Activated CD8-positive, alpha-beta T cell treated with anti-CD3 and anti-CD28 coated beads, Interleukin-2, amount 10 ng/mL, durations not matched to agents 7 days and 5 days (primary cell): ENCODE measurements at regions of chr1 and their contacts with region 1.

Region 1: GRCh38 chr1:40774266-40774998 is 9.2 kb upstream of the KCNQ4 start:
- DNase-seq: peak; percentile 76
- ATAC-seq: peak; percentile 72
- H3K4me3 Mint-ChIP-seq: no peak overlapping the region
- H3K27ac Mint-ChIP-seq: peak overlapping the region; percentile 11
- H3K4me1 Mint-ChIP-seq: peaks cover 26% of the 10 kb centered on the region
- H3K27me3 Mint-ChIP-seq: no peaks in the 10 kb centered on the region

Region 2: GRCh38 chr1:40717955-40718354 is 56.5 kb before region 1 on chr1:
- CTCF ChIA-PET with region 1: interaction called, 13 read pairs
- POLR2A ChIA-PET with region 1: no interaction called
- DNase-seq: no peak
- ATAC-seq: no peak
- H3K4me3 Mint-ChIP-seq: no peak overlapping the region
- H3K27ac Mint-ChIP-seq: no peak overlapping the region
- H3K4me1 Mint-ChIP-seq: peaks cover 36% of the 10 kb centered on the region
- H3K27me3 Mint-ChIP-seq: no peaks in the 10 kb centered on the region

Region 3: GRCh38 chr1:40763742-40764532 is 10.5 kb before region 1 on chr1:
- CTCF ChIA-PET with region 1: interaction called, 78 read pairs
- POLR2A ChIA-PET with region 1: no interaction called
- DNase-seq: no peak
- ATAC-seq: peak; percentile 50
- H3K4me3 Mint-ChIP-seq: peak overlapping the region; percentile 62
- H3K27ac Mint-ChIP-seq: peak overlapping the region; percentile 95
- H3K4me1 Mint-ChIP-seq: peaks cover 49% of the 10 kb centered on the region
- H3K27me3 Mint-ChIP-seq: no peaks in the 10 kb centered on the region

Region 4: GRCh38 chr1:40802742-40803113 is 28.3 kb after region 1 on chr1:
- CTCF ChIA-PET with region 1: interaction called, 69 read pairs
- POLR2A ChIA-PET with region 1: no interaction called
- DNase-seq: no peak
- ATAC-seq: no peak
- H3K4me3 Mint-ChIP-seq: no peak overlapping the region
- H3K27ac Mint-ChIP-seq: no peak overlapping the region
- H3K4me1 Mint-ChIP-seq: peaks cover 29% of the 10 kb centered on the region
- H3K27me3 Mint-ChIP-seq: peaks cover 10% of the 10 kb centered on the region

Region 5: GRCh38 chr1:40849801-40850592 is 75.6 kb after region 1 on chr1:
- CTCF ChIA-PET with region 1: interaction called, 273 read pairs
- POLR2A ChIA-PET with region 1: interaction called, 3 read pairs
- DNase-seq: peak; percentile 86
- ATAC-seq: peak; percentile 92
- H3K4me3 Mint-ChIP-seq: peak overlapping the region; percentile 32
- H3K27ac Mint-ChIP-seq: peak overlapping the region; percentile 80
- H3K4me1 Mint-ChIP-seq: peaks cover 32% of the 10 kb centered on the region
- H3K27me3 Mint-ChIP-seq: peaks cover 4% of the 10 kb centered on the region